ENCODE measurements at regions of chr16 and their contacts with region 1.

Region 1: GRCh38 chr16:57576429-57576870 is 34.0 kb downstream of the ADGRG5 start:
- DNase-seq: peak; percentile 94
- H3K4me3 Mint-ChIP-seq: no peak overlapping the region
- H3K27ac Mint-ChIP-seq: no peak overlapping the region
- H3K4me1 Mint-ChIP-seq: peaks cover 9% of the 10 kb centered on the region
- H3K27me3 Mint-ChIP-seq: peaks cover 3% of the 10 kb centered on the region

Region 2: GRCh38 chr16:57600048-57600835 is 23.8 kb after region 1 on chr16:
- CTCF ChIA-PET with region 1: interaction called, 27 read pairs
- intact Hi-C with region 1: no loop called
- DNase-seq: peak; percentile 65
- H3K4me3 Mint-ChIP-seq: no peak overlapping the region
- H3K27ac Mint-ChIP-seq: no peak overlapping the region
- H3K4me1 Mint-ChIP-seq: peaks cover 25% of the 10 kb centered on the region
- H3K27me3 Mint-ChIP-seq: no peaks in the 10 kb centered on the region

Region 3: GRCh38 chr16:57639172-57639887 is 62.9 kb after region 1 on chr16:
- CTCF ChIA-PET with region 1: interaction called, 15 read pairs
- intact Hi-C with region 1: no loop called
- DNase-seq: no peak
- H3K4me3 Mint-ChIP-seq: no peak overlapping the region
- H3K27ac Mint-ChIP-seq: no peak overlapping the region
- H3K4me1 Mint-ChIP-seq: peaks cover 2% of the 10 kb centered on the region
- H3K27me3 Mint-ChIP-seq: peaks cover 4% of the 10 kb centered on the region

Region 4: DNA sequence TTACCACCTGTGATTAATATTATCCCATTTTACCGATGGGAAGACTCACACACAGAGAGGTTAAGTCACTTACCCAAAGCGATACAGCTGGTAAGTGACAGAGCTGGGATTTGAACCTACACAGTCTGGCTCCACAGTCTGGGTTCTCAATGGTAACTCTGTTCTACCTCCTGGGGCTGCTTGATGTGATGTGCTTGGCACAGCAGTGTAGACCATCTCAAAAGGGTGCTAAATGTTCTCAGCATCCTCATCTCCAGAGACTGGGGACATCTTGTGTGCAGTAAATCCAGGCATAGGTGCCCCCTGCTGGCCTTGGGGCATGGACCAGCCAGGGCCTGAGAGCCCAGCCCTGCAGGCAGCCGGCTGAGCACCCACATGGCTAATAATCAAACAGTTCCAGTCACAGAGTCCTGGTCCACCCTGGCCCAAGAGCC is 143.7 kb after region 1 on chr16:
- CTCF ChIA-PET with region 1: interaction called, 3 read pairs
- intact Hi-C with region 1: loop called (anchors 1 kb)
- DNase-seq: peak; percentile 66
- H3K4me3 Mint-ChIP-seq: no peak overlapping the region
- H3K27ac Mint-ChIP-seq: no peak overlapping the region
- H3K4me1 Mint-ChIP-seq: no peaks in the 10 kb centered on the region
- H3K27me3 Mint-ChIP-seq: no peaks in the 10 kb centered on the region

Region 5: DNA sequence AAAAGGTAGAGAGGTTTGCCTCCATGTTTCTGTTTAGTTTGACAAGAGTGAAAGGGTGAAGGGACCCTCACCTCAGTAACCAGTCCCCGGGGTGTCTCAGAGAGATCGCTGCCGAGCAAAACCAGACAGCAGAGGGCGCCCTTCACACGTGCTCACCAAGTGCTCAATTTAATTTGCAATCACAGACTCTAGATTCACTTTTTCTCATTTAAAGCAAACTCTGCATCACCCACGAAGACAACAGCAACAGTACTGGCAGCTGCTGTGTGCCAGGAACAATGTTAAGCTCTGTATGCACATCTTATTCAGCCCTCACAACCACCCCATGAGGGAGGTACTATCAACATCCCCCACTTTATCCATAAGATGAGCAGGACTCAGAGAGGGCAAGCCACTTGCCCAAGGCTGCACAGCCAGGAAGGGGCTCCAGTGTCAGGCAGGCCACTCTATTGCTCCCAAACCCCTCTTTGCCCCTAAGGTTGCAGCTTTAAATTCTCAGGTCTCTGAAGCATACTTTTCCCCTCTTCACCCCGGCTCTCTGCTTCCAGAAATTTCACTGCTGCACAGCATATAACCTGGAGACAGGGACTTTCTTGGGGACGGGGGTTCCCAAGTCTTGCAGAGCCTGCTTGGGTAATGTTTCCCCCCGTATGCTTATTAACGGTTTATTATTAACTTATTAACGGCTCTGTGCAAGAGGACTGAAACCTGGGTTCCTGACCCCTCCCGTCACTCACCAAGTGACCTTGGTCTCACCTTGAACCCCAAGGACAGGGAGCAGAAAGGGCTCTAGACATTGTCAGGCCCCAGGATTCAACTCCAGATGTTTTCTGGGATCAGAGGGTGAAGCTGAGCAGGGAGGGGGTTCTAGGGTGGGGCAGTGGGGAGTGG is 323.6 kb after region 1 on chr16:
- CTCF ChIA-PET with region 1: no interaction called
- intact Hi-C with region 1: loop called (anchors 1 kb)
- DNase-seq: peak; percentile 83
- H3K4me3 Mint-ChIP-seq: no peak overlapping the region
- H3K27ac Mint-ChIP-seq: no peak overlapping the region
- H3K4me1 Mint-ChIP-seq: no peaks in the 10 kb centered on the region
- H3K27me3 Mint-ChIP-seq: peaks cover 3% of the 10 kb centered on the region

Measured in activated naive CD4-positive, alpha-beta T cell treated with anti-CD3 and anti-CD28 coated beads for 36 hours (primary cell).